ENCODE measurements at regions of chr15 and their contacts with region 1.

Region 1: DNA sequence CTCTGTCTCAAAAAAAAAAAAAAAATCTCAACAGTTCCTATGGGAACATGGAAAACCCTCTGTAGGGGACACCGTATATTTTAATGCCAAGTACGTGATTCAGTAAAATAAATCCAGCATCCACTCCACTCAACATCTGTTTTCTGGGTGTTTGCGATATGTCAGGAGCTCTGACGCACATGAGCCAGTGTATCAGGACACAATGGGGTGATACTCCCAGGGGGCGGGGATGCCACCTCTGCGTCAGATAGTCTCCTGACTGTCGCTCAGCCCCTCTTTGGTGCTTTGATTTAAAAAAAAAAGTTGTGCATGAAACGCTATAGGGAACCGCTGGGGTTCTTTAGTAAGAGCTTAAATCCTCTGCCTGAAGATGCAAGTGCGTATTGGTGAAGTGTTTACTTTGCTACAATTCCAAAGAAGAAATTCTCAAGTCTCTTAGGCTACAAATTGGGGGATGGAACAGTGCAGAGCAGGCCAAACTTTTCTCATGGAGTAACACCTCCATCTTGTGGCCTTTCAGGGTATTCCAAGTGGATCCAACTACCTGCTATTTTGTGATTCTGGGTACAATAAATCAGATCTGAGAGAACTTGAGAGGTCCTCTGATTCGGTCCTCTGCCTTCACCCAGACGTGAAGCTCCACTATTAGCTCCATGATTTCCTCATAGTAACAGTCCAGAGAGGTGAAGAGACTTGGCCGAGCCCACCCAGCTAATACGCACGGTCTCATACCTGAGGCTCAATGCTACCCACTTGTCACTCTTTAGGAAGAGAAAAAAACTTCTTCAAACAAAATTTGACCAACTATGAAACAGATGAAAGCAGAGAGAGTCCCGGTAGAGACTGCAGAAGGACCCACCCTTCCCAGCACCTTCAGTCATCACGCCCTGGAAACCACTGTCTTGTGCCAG is 9.3 kb upstream of the NR2E3 start:
- DNase-seq: peak; percentile 67
- H3K4me3 ChIP-seq: no peak overlapping the region; the same call in 1 of the 2 replicates
- H3K27ac ChIP-seq: peak overlapping the region; percentile 59
- H3K27me3 ChIP-seq: no peaks in the 10 kb centered on the region
- CTCF ChIP-seq: peak; percentile 88

Region 2: GRCh38 chr15:71443538-71443937 is 357.6 kb before region 1 on chr15:
- CTCF ChIA-PET with region 1: interaction called, 18 read pairs
- POLR2A ChIA-PET with region 1: no interaction called
- DNase-seq: no peak
- H3K4me3 ChIP-seq: no peak overlapping the region
- H3K27ac ChIP-seq: no peak overlapping the region
- H3K27me3 ChIP-seq: no peaks in the 10 kb centered on the region
- CTCF ChIP-seq: peak; percentile 84

Region 3: DNA sequence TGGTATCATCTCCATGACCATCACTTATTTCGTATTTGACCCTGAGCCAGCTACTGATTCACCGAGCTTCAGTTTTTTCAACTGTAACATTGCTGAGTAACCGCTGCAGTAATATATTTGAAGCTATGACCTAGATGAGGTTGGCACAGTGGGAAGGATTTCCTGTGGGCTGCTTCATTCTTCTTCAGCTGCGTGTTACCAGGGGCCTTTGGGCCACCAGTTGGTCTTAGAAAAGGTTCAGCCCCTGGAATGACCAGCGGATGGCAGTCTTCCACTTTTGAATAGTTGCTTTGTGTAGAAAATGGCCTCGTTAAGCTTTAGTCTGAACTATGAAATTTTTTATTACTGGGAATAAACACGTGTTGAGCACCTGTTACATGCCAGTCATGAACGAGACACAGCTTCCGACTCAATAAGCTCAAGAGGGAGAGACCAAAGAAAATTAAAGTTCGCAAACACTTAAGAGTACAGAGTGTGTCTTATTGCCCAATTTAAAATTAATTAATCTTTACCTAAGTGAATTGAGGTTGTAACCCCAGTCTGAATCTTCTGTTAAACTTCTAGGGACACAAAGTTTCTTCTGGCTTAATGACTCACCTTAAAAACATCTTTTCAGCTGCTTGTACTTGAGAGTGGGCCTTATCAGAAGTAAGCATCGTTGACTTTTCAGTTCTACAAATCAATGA is 48.3 kb before region 1 on chr15:
- CTCF ChIA-PET with region 1: interaction called, 35 read pairs
- POLR2A ChIA-PET with region 1: no interaction called
- DNase-seq: peak; percentile 46
- H3K4me3 ChIP-seq: no peak overlapping the region
- H3K27ac ChIP-seq: peak overlapping the region; percentile 22
- H3K27me3 ChIP-seq: no peaks in the 10 kb centered on the region
- CTCF ChIP-seq: peak; percentile 47

Region 4: DNA sequence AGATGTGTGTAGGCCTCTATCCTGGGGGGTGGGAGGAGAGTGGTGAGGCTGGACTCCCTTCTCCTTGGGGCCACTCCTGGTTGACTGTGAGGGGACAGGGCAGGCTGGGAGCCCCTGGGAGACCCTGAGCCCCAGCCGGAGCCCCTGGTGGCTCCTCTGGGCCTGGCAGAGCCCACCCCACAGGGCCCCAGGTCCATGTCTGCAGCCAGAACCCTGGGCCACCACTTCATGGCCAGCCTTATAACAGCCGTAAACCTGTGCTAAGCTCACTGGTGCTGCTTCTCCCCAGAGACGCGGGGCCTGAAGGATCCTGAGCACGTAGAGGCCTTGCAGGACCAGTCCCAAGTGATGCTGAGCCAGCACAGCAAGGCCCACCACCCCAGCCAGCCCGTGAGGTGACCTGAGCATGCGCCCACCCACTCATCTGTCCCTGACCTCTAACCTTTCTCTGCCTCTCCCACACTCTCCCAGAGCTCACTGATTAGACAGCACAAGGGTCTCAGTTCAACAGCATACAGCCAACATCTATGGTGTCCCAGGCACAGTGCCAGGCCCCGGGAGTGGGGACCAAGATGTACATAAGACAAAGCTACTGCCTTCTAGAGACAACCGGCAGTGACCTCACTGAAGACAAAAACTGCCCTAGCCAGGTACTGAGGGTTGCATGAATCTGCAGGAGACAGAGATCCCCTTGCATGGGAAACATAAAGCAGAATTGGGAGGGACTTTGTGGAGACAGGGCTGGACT is 12.8 kb after region 1 on chr15:
- CTCF ChIA-PET with region 1: no interaction called
- POLR2A ChIA-PET with region 1: no interaction called
- DNase-seq: no peak
- H3K4me3 ChIP-seq: no peak overlapping the region
- H3K27ac ChIP-seq: no peak overlapping the region
- H3K27me3 ChIP-seq: no peaks in the 10 kb centered on the region
- CTCF ChIP-seq: no peak

Region 5: DNA sequence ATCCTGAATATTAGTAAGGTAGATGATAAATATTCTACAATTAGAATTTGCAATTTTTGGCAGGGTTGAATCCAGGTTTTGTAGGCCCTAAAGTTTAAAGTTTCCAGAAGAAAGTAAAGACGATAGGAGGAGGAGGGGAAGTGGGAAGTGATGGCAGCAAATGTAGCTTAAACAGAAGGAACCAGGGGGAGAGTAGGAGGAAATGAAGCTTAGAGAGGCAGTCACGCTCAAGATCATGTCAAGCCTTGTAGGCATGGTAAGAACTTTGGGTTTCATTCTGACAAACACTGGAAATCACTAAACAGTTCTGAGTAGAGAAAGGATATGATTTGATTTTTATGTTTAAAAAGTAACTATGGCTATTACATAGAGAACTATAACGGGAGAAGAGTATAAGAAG is 73.2 kb after region 1 on chr15:
- CTCF ChIA-PET with region 1: no interaction called
- POLR2A ChIA-PET with region 1: no interaction called
- DNase-seq: no peak
- H3K4me3 ChIP-seq: no peak overlapping the region
- H3K27ac ChIP-seq: no peak overlapping the region
- H3K27me3 ChIP-seq: no peaks in the 10 kb centered on the region
- CTCF ChIP-seq: no peak

Region 6: DNA sequence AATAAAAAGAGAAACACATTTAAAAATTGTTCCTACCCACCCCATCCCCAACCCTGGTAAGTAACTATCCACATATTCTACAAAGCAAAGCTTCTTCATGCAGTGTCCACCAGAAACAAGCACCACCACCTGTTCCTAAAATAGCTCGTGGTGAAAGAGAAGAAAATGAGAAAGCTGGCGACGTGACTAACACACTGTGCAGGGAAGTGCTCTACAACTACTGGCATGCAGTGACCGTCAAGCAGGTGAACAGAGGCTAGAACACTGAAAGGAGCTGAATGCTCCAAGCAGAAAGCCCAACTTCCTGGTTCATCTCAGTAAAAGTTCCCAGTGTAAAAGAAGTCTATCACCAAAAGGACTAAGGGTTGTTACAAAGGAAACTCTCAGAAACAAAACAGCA is 89.9 kb after region 1 on chr15:
- CTCF ChIA-PET with region 1: no interaction called
- POLR2A ChIA-PET with region 1: interaction called, 11 read pairs
- DNase-seq: no peak
- H3K4me3 ChIP-seq: no peak overlapping the region
- H3K27ac ChIP-seq: no peak overlapping the region
- H3K27me3 ChIP-seq: no peaks in the 10 kb centered on the region
- CTCF ChIP-seq: no peak

Measured in AG04450 (cell line).